WTC11 (cell line): ENCODE measurements at regions of chr20 and their contacts with region 1.

Region 1: DNA sequence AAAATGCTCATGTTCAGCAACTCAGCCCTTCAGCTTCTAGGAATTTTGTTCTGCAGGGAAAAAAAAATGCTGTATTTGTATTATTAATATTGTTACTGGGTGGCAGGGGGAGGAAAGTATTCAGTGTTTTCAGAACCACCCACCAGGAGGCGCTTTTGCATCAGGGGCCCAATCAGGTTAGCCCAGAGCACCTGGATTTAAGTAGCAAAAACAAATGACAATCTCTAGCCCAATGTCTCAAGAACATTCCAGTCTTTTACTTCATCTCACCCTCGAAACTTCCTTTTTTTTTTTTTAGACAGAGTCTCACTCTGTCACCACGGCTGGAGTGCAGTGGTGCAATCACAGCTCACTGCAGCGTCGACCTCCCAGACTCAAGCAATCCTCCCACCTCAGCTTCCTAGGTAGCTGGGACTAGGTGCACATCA is 635 bp upstream of the C20orf203 start:
- DNase-seq: peak; percentile 69
- ATAC-seq: peak; percentile 53
- H3K4me3 Mint-ChIP-seq: no peak overlapping the region
- H3K27ac Mint-ChIP-seq: no peak overlapping the region; the same call in 1 of the 2 replicates
- H3K4me1 Mint-ChIP-seq: peaks cover 42% of the 10 kb centered on the region
- H3K27me3 Mint-ChIP-seq: no peaks in the 10 kb centered on the region
- CTCF ChIP-seq: peak; percentile 61

Region 2: GRCh38 chr20:32743237-32744112 is 69.1 kb after region 1 on chr20 and contains the start of gene COMMD7:
- CTCF ChIA-PET with region 1: interaction called, 14 read pairs
- POLR2A ChIA-PET with region 1: no interaction called
- DNase-seq: peak; percentile 71
- ATAC-seq: peak; percentile 83
- H3K4me3 Mint-ChIP-seq: peak within 1 kb of the TSS; percentile 98
- H3K27ac Mint-ChIP-seq: peak within 1 kb of the TSS; percentile 98
- H3K4me1 Mint-ChIP-seq: peaks cover 43% of the 10 kb centered on the region
- H3K27me3 Mint-ChIP-seq: no peaks in the 10 kb centered on the region
- CTCF ChIP-seq: no peak
- total RNA-seq, gene COMMD7: 41.8 to 42.4 TPM (median 42.3 TPM) in 3 replicates

Region 3: GRCh38 chr20:32762149-32762753 is 87.9 kb after region 1 on chr20 and contains the start of gene DNMT3B:
- CTCF ChIA-PET with region 1: interaction called, 23 read pairs
- POLR2A ChIA-PET with region 1: interaction called, 3 read pairs
- DNase-seq: peak; percentile 98
- ATAC-seq: peak; percentile 77; the same call in 1 of the 2 replicates
- H3K4me3 Mint-ChIP-seq: peak within 1 kb of the TSS; percentile 91
- H3K27ac Mint-ChIP-seq: peak within 1 kb of the TSS; percentile 73
- H3K4me1 Mint-ChIP-seq: peaks cover 45% of the 10 kb centered on the region
- H3K27me3 Mint-ChIP-seq: no peaks in the 10 kb centered on the region
- CTCF ChIP-seq: no peak
- total RNA-seq, gene DNMT3B: 638 to 682 TPM (median 641 TPM) in 3 replicates

Region 4: GRCh38 chr20:32877507-32877906 is 203.1 kb after region 1 on chr20:
- CTCF ChIA-PET with region 1: interaction called, 10 read pairs
- POLR2A ChIA-PET with region 1: no interaction called
- DNase-seq: no peak
- ATAC-seq: peak; percentile 75
- H3K4me3 Mint-ChIP-seq: no peak overlapping the region
- H3K27ac Mint-ChIP-seq: peak overlapping the region; percentile 84; the same call in 1 of the 2 replicates
- H3K4me1 Mint-ChIP-seq: peaks cover 5% of the 10 kb centered on the region; the same call in 1 of the 2 replicates
- H3K27me3 Mint-ChIP-seq: no peaks in the 10 kb centered on the region
- CTCF ChIP-seq: no peak

Region 5: GRCh38 chr20:32894026-32894483 is 219.7 kb after region 1 on chr20:
- CTCF ChIA-PET with region 1: interaction called, 13 read pairs
- POLR2A ChIA-PET with region 1: no interaction called
- DNase-seq: peak; percentile 83
- ATAC-seq: peak; percentile 88
- H3K4me3 Mint-ChIP-seq: no peak overlapping the region
- H3K27ac Mint-ChIP-seq: no peak overlapping the region
- H3K4me1 Mint-ChIP-seq: peaks cover 5% of the 10 kb centered on the region
- H3K27me3 Mint-ChIP-seq: no peaks in the 10 kb centered on the region
- CTCF ChIP-seq: peak; percentile 82